Activated CD4-positive, alpha-beta T cell treated with anti-CD3 and anti-CD28 coated beads for 36 hours (primary cell): ENCODE measurements at regions of chr7 and their contacts with region 1.

Region 1: DNA sequence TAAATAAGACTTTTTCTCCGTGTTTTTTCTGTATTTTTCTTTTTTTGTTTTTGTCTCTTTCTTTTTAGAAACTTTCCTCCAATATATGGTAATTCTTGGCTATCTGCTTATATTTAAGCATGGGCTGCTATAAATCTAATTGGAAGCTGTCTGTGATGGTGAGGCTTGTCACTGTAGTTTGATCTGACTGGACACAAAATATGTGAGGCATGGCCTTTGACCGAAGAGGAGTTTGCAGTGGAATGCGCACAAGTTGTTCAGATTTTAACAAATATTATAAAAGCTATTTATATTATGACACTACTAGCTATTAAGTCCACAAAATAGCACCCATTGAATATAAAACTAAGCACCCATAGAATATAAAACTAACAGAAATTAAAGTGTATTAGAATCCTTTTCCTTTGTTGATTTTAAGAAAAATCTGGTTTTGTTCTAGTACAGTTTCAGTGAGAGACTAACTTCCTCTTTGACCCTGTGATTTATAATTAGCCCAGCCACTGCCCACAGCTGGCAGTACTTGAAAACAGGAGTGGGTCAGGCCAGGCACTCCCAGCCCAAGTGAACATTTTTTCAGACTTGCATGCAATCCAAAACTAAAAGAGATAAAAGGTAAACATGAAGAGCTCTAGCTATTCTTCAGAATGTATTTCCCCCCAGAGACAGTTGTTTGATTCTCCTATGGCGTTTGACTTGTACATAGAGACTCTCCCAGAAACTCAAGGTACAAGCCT is 69.9 kb upstream of the FGL2 start:
- DNase-seq: no peak
- ATAC-seq: no peak
- H3K4me3 Mint-ChIP-seq: no peak overlapping the region
- H3K27ac Mint-ChIP-seq: no peak overlapping the region
- H3K4me1 Mint-ChIP-seq: peaks cover 13% of the 10 kb centered on the region
- H3K27me3 Mint-ChIP-seq: no peaks in the 10 kb centered on the region

Region 2: GRCh38 chr7:77205706-77206105 is 63.8 kb before region 1 on chr7:
- CTCF ChIA-PET with region 1: no interaction called
- POLR2A ChIA-PET with region 1: no interaction called
- intact Hi-C with region 1: no loop called
- DNase-seq: no peak
- ATAC-seq: no peak
- H3K4me3 Mint-ChIP-seq: no peak overlapping the region
- H3K27ac Mint-ChIP-seq: no peak overlapping the region
- H3K4me1 Mint-ChIP-seq: peaks cover 2% of the 10 kb centered on the region
- H3K27me3 Mint-ChIP-seq: no peaks in the 10 kb centered on the region

Region 3: GRCh38 chr7:77247206-77247850 is 22.2 kb before region 1 on chr7:
- CTCF ChIA-PET with region 1: interaction called, 11 read pairs
- POLR2A ChIA-PET with region 1: no interaction called
- intact Hi-C with region 1: no loop called
- DNase-seq: peak; percentile 94
- ATAC-seq: peak; percentile 95
- H3K4me3 Mint-ChIP-seq: no peak overlapping the region
- H3K27ac Mint-ChIP-seq: no peak overlapping the region
- H3K4me1 Mint-ChIP-seq: no peaks in the 10 kb centered on the region
- H3K27me3 Mint-ChIP-seq: no peaks in the 10 kb centered on the region

Region 4: DNA sequence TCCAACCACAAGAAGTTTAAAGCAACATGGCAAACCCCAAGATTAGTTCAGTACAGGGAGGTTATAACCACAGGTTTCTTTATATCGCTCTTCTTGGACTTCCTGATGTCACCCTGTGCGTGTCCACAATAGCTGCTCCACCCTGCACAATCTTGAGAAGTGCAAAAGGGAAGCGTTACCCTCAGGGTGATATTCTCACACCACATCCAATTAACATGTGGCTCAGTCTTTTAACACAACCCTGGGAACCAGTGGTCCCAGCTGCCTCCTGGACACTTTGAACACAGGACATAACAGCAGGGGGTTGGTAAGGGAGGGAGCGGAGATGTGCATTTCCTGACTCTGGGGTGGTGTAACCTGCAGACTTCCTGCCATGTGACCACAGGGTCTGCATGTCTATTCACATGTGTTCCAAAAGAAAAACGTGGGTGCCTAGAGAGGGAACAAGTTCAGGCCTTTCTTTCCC is 82.0 kb after region 1 on chr7:
- CTCF ChIA-PET with region 1: no interaction called
- POLR2A ChIA-PET with region 1: no interaction called
- intact Hi-C with region 1: loop called in 1 of 2 experiments (anchors 5 kb)
- DNase-seq: peak; percentile 55
- ATAC-seq: peak; percentile 83
- H3K4me3 Mint-ChIP-seq: peak overlapping the region; percentile 53
- H3K27ac Mint-ChIP-seq: peak overlapping the region; percentile 87
- H3K4me1 Mint-ChIP-seq: peaks cover 56% of the 10 kb centered on the region
- H3K27me3 Mint-ChIP-seq: no peaks in the 10 kb centered on the region

Region 5: GRCh38 chr7:77393269-77393668 is 123.7 kb after region 1 on chr7:
- CTCF ChIA-PET with region 1: no interaction called
- POLR2A ChIA-PET with region 1: no interaction called
- intact Hi-C with region 1: loop called in 1 of 2 experiments (anchors 1 kb)
- DNase-seq: peak; percentile 72
- ATAC-seq: peak; percentile 98
- H3K4me3 Mint-ChIP-seq: no peak overlapping the region
- H3K27ac Mint-ChIP-seq: no peak overlapping the region
- H3K4me1 Mint-ChIP-seq: peaks cover 26% of the 10 kb centered on the region
- H3K27me3 Mint-ChIP-seq: no peaks in the 10 kb centered on the region